BJ (cell line): ENCODE measurements at regions of chrX and their contacts with region 1.

Region 1: GRCh38 chrX:81174286-81174685 is 27.4 kb downstream of the HMGN5 start:
- DNase-seq: no peak
- H3K4me3 ChIP-seq: no peak overlapping the region
- H3K27me3 ChIP-seq: no peaks in the 10 kb centered on the region
- CTCF ChIP-seq: no peak

Region 2: DNA sequence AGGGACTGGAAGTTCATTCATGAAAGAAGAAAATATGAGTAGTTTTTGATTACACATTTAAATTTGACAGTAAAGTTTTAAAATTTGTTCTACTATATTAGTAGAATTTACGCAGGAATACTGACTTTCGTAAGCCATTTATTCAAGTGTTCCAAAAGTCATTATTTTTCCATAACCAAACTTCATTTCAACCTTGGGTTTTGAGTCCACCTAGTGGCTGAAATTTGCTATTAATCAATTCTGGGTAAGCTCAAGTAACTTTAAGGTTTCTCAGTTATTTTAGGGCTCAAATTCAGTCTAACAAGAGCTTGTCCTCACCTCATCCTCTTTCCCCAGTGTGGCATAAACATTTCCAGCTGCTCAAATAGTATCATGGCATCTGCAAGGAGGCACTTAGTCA is 203.0 kb after region 1 on chrX:
- CTCF ChIA-PET with region 1: interaction called, 10 read pairs
- POLR2A ChIA-PET with region 1: no interaction called
- DNase-seq: no peak
- H3K4me3 ChIP-seq: no peak overlapping the region
- H3K27me3 ChIP-seq: no peaks in the 10 kb centered on the region
- CTCF ChIP-seq: peak; percentile 40; the same call in 1 of the 2 replicates